MCF 10A (cell line): ENCODE measurements at regions of chr17 and their contacts with region 1.

Region 1: GRCh38 chr17:73255671-73256181 is 6.0 kb downstream of the CPSF4L start:
- DNase-seq: peak; percentile 43
- H3K4me3 Mint-ChIP-seq: no peak overlapping the region
- H3K27ac Mint-ChIP-seq: no peak overlapping the region
- H3K4me1 Mint-ChIP-seq: no peaks in the 10 kb centered on the region
- H3K27me3 Mint-ChIP-seq: no peaks in the 10 kb centered on the region
- CTCF ChIP-seq: peak; percentile 98

Region 2: DNA sequence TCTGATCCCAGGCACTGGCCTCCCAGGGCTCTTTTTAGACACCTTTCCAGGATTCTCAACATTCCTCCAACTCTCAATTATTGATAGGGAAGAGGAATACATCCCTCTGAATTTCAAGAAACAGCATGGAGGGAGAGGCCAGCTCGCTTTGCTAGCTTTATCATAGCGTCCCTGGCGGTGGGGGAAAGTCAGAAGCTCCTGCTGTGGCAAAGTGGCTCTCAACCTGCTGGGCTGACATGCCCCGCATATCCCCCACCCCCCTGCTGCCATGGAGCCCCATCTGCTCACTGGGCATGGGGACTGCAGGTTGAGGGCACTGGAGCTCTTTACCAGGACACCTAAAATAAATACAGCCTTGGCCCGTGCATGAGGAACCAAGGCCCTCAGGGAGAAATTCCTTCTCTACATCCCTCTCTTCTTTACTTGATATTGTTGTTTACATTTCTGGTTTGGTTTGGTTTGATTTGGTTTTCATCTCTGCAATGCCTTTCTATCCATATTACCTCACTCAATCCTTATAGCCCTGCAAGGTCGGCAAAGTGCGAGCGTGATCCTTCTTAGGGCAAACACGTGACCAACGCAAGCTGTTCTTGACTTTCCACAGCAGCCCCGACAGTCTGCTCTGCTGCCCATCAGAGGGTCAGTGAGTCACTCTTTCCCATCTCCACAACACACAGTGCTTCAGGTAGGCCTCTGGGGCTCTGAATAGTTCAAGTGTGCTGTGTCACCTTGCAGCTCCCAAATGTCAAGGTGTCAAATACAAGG is 303.3 kb before region 1 on chr17:
- CTCF ChIA-PET with region 1: no interaction called
- POLR2A ChIA-PET with region 1: no interaction called
- intact Hi-C with region 1: no loop called
- DNase-seq: no peak
- H3K4me3 Mint-ChIP-seq: no peak overlapping the region
- H3K27ac Mint-ChIP-seq: no peak overlapping the region
- H3K4me1 Mint-ChIP-seq: no peaks in the 10 kb centered on the region
- H3K27me3 Mint-ChIP-seq: no peaks in the 10 kb centered on the region
- CTCF ChIP-seq: no peak

Region 3: GRCh38 chr17:73203135-73203787 is 52.5 kb before region 1 on chr17:
- CTCF ChIA-PET with region 1: no interaction called
- POLR2A ChIA-PET with region 1: no interaction called
- intact Hi-C with region 1: no loop called
- DNase-seq: no peak
- H3K4me3 Mint-ChIP-seq: no peak overlapping the region
- H3K27ac Mint-ChIP-seq: no peak overlapping the region
- H3K4me1 Mint-ChIP-seq: no peaks in the 10 kb centered on the region
- H3K27me3 Mint-ChIP-seq: no peaks in the 10 kb centered on the region
- CTCF ChIP-seq: no peak

Region 4: GRCh38 chr17:73237714-73238113 is 18.0 kb before region 1 on chr17:
- CTCF ChIA-PET with region 1: interaction called, 10 read pairs
- POLR2A ChIA-PET with region 1: interaction called, 18 read pairs
- intact Hi-C with region 1: no loop called
- DNase-seq: no peak
- H3K4me3 Mint-ChIP-seq: no peak overlapping the region
- H3K27ac Mint-ChIP-seq: no peak overlapping the region
- H3K4me1 Mint-ChIP-seq: peaks cover 21% of the 10 kb centered on the region
- H3K27me3 Mint-ChIP-seq: no peaks in the 10 kb centered on the region
- CTCF ChIP-seq: no peak

Region 5: DNA sequence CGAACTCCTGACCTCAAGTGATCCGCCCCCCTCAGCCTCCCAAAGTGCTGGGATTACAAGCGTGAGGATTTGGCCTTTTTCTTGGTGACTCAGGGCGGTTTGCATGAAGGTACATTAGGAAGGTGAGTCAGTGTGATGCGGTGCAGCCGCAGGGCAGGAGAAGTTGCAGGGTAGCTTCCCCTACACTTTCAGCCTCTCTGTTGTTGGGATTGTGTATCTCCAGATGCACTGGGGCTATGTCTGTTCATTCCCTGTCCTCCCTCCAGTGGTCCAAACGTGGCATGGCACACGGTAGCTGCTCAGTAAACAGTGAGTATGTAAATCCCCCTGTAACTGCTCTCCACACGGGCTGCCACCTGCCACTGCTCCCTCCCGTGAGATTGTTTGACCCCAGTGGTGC is 165.2 kb after region 1 on chr17:
- CTCF ChIA-PET with region 1: no interaction called
- POLR2A ChIA-PET with region 1: no interaction called
- intact Hi-C with region 1: loop called (anchors 5 kb)
- DNase-seq: peak; percentile 84
- H3K4me3 Mint-ChIP-seq: no peak overlapping the region
- H3K27ac Mint-ChIP-seq: no peak overlapping the region
- H3K4me1 Mint-ChIP-seq: peaks cover 5% of the 10 kb centered on the region
- H3K27me3 Mint-ChIP-seq: no peaks in the 10 kb centered on the region
- CTCF ChIP-seq: no peak